ENCODE measurements at regions of chr16 and their contacts with region 1.

Region 1: GRCh38 chr16:66894948-66895688 is 14.8 kb downstream of the PDP2 start:
- DNase-seq: peak; percentile 83
- ATAC-seq: peak; percentile 90
- H3K4me3 Mint-ChIP-seq: no peak overlapping the region
- H3K27ac Mint-ChIP-seq: peak overlapping the region; percentile 13
- H3K4me1 Mint-ChIP-seq: peaks cover 20% of the 10 kb centered on the region
- H3K27me3 Mint-ChIP-seq: no peaks in the 10 kb centered on the region

Region 2: GRCh38 chr16:66880288-66881013 is 14.7 kb before region 1 on chr16 and contains the start of gene PDP2:
- CTCF ChIA-PET with region 1: interaction called, 34 read pairs
- DNase-seq: peak; percentile 97
- ATAC-seq: peak; percentile 98
- H3K4me3 Mint-ChIP-seq: peak within 1 kb of the TSS; percentile 99
- H3K27ac Mint-ChIP-seq: peak within 1 kb of the TSS; percentile 97
- H3K4me1 Mint-ChIP-seq: peaks cover 65% of the 10 kb centered on the region
- H3K27me3 Mint-ChIP-seq: no peaks in the 10 kb centered on the region
- total RNA-seq, gene PDP2: 29.2 to 33.3 TPM

Region 3: DNA sequence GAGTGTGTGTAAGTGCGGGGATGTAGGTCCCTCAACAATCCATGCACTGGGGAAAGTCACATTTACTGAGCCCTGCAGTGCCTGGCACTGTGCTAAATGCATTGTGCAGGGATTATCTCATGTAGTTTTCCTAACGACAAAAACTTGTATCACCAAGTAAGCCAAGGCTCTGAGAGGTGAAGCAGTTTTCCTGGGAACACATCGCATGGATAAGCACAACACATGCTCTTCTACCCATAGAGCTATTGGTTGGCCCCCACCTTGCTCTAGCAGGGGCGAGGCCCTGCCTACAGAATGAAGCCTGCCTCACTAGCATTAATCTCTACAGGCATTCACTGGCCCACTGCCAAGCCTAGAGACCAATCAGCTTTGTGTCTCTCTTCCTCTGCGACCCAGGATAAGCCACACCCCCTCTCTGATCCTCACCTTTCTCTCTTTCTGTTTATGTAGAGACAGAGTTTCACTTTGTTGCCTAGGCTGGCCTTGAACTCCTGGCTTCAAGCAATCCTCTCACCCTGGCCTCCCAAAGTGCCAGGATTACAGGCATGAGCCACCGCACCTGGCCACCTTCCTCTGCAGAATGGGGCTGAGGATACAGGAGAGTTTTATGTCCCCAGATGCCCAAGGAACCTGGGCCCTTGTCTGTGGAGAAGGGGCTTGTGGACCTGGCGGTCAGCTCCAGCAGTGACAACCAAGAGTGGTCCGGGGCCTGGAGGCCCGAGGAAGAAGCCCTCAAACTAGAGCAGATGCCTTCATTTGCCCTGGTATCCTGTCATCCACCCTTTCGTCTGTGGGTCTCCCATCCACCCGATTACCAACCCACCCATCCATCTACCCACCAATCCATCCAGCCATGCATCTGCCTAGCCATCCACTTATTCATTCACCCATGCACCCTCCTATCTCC is 10.8 kb after region 1 on chr16:
- CTCF ChIA-PET with region 1: interaction called, 15 read pairs
- DNase-seq: peak; percentile 65
- ATAC-seq: peak; percentile 66
- H3K4me3 Mint-ChIP-seq: no peak overlapping the region
- H3K27ac Mint-ChIP-seq: no peak overlapping the region
- H3K4me1 Mint-ChIP-seq: peaks cover 4% of the 10 kb centered on the region
- H3K27me3 Mint-ChIP-seq: no peaks in the 10 kb centered on the region

Region 4: DNA sequence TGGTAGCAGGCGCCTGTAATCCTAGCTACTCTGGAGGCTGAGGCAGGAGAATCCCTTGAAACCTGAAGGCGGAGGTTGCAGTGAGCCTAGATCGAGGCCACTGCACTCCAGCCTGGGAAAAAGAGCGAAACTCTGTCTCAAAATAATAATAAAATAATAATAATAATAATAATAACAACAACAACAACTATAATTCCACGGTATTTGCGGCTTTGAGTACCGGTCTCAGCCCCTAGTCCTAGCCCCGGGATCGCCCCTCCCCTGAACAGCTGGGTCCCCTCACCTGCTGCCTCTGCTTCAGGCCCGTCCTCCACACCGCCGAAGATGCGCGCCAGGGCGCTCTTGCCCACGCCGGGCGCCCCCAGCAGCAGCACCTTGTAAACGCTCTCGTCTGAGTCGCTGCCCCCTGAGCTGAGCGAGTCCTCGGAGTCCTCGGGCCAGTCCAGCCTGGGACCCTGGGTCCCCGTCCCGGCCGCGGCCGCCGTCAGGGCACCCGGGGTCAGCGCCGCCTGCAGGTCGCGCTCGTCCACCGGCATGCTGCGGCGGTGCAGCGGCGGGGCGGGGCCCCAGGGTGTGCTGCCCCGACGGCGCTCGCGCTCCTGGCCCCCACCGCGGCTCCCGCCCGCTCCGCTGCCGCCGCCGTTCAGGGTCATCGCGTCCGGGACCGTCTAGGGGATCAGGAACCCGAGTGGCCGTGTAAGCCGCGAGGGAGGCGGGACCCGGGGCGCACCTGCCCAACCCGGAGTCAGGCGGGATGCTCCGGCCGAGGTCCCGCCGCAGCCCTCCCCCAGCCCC is 29.6 kb after region 1 on chr16:
- CTCF ChIA-PET with region 1: interaction called, 140 read pairs
- DNase-seq: peak; percentile 56
- ATAC-seq: peak; percentile 87
- H3K4me3 Mint-ChIP-seq: peak overlapping the region; percentile 60
- H3K27ac Mint-ChIP-seq: no peak overlapping the region
- H3K4me1 Mint-ChIP-seq: peaks cover 21% of the 10 kb centered on the region
- H3K27me3 Mint-ChIP-seq: peaks cover 46% of the 10 kb centered on the region

Region 5: DNA sequence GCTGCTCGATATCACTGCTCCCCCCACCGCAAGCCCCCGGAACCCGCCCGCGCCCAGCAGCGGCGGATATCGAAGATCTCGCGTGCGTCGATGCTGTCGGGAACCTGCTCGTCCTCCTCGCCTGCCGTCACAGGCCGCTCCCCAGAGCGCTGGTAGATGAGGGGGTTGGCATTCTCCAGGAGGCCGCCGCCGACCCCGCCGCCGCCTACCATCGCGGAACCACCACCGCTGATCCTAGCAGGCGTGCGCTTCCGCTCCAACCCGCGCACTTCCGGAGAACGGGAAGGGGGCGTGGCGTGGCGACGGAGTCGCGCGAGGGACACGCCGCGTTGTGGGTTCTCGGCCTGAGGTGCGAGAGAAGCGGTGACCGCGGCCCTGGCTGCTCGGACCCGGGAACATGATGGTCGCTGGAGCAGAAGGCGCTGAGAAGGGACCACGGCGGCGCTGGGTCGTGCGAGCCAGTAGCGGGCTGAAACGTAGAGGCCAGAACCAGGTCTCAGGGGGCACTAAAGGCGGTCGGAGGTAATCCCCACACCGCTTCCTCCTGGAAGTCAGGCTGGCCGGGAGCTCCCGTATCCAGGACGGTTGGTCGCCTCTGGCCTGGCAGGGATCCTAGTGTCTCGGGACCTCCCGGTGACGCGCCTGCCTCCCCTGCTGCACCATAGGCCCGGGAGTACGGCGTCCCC is 39.2 kb after region 1 on chr16 and contains the start of gene CIAO2B:
- CTCF ChIA-PET with region 1: interaction called, 140 read pairs
- DNase-seq: peak; percentile 91
- ATAC-seq: peak; percentile 88
- H3K4me3 Mint-ChIP-seq: peak within 1 kb of the TSS; percentile 91
- H3K27ac Mint-ChIP-seq: peak within 1 kb of the TSS; percentile 95
- H3K4me1 Mint-ChIP-seq: peaks cover 51% of the 10 kb centered on the region
- H3K27me3 Mint-ChIP-seq: no peaks in the 10 kb centered on the region
- total RNA-seq, gene CIAO2B: 124 to 131 TPM

Measured in activated CD8-positive, alpha-beta memory T cell treated with anti-CD3 and anti-CD28 coated beads, Interleukin-2, amount 10 ng/mL, durations not matched to agents 7 days and 5 days (primary cell).